Activated naive CD4-positive, alpha-beta T cell treated with anti-CD3 and anti-CD28 coated beads, Interleukin-2, amount 10 ng/mL, durations not matched to agents 7 days and 5 days (primary cell): ENCODE measurements at regions of chr14 and their contacts with region 1.

Region 1: DNA sequence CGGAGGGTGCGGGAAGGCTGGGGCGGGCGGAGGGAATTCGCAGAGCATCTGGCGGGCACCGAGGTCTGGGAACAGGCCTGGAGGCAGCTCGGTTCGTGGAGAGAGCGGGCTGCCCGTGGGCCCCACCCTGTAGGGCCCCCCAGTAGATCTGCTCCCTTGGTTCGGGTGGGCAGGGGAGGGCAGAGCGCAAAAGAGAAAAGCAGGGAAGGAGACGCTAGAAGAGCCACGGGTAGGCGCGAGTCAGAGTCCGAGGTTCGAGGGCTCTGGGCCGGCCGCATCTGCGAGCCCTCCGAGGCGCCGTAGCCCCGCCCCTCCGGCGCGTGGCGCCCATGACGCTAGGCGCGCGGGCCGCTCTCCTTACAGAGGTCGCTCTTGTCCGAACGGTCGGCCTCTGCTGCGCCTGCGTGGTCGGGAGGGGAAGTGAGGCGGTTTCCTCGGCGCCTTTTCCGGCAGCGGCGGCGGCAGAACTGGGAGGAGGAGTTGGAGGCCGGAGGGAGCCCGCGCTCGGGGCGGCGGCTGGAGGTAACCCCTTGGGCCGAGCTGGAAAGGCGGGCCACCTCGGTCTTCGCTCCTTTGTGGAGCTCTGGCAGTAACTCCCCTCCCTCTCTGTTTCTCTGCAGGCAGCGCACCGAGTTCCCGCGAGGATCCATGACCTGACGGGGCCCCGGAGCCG is at the start of gene ARF6:
- DNase-seq: peak; percentile 97
- H3K4me3 Mint-ChIP-seq: peak within 1 kb of the TSS; percentile 99
- H3K27ac Mint-ChIP-seq: peak within 1 kb of the TSS; percentile 99
- H3K4me1 Mint-ChIP-seq: peaks cover 28% of the 10 kb centered on the region
- H3K27me3 Mint-ChIP-seq: no peaks in the 10 kb centered on the region

Region 2: GRCh38 chr14:49879683-49880204 is 13.0 kb before region 1 on chr14:
- CTCF ChIA-PET with region 1: interaction called, 13 read pairs
- DNase-seq: peak; percentile 69
- H3K4me3 Mint-ChIP-seq: no peak overlapping the region
- H3K27ac Mint-ChIP-seq: peak overlapping the region; percentile 68
- H3K4me1 Mint-ChIP-seq: peaks cover 30% of the 10 kb centered on the region
- H3K27me3 Mint-ChIP-seq: peaks cover 4% of the 10 kb centered on the region

Region 3: GRCh38 chr14:49940808-49941421 is 48.1 kb after region 1 on chr14:
- CTCF ChIA-PET with region 1: no interaction called
- DNase-seq: peak; percentile 41
- H3K4me3 Mint-ChIP-seq: peak overlapping the region; percentile 31
- H3K27ac Mint-ChIP-seq: peak overlapping the region; percentile 86
- H3K4me1 Mint-ChIP-seq: peaks cover 70% of the 10 kb centered on the region
- H3K27me3 Mint-ChIP-seq: no peaks in the 10 kb centered on the region